ENCODE measurements at regions of chr3 and their contacts with region 1.

Region 1: GRCh38 chr3:142850386-142851023 is 38.4 kb downstream of the PCOLCE2 start:
- DNase-seq: peak; percentile 75
- H3K4me3 Mint-ChIP-seq: no peak overlapping the region
- H3K27ac Mint-ChIP-seq: no peak overlapping the region
- H3K4me1 Mint-ChIP-seq: peaks cover 18% of the 10 kb centered on the region
- H3K27me3 Mint-ChIP-seq: no peaks in the 10 kb centered on the region
- CTCF ChIP-seq: no peak

Region 2: GRCh38 chr3:142489557-142490323 is 360.8 kb before region 1 on chr3:
- CTCF ChIA-PET with region 1: no interaction called
- intact Hi-C with region 1: no loop called
- DNase-seq: no peak
- H3K4me3 Mint-ChIP-seq: no peak overlapping the region
- H3K27ac Mint-ChIP-seq: no peak overlapping the region
- H3K4me1 Mint-ChIP-seq: no peaks in the 10 kb centered on the region
- H3K27me3 Mint-ChIP-seq: no peaks in the 10 kb centered on the region
- CTCF ChIP-seq: no peak

Region 3: GRCh38 chr3:142796823-142797222 is 53.7 kb before region 1 on chr3:
- CTCF ChIA-PET with region 1: no interaction called
- intact Hi-C with region 1: no loop called
- DNase-seq: no peak
- H3K4me3 Mint-ChIP-seq: no peak overlapping the region
- H3K27ac Mint-ChIP-seq: no peak overlapping the region
- H3K4me1 Mint-ChIP-seq: no peaks in the 10 kb centered on the region
- H3K27me3 Mint-ChIP-seq: no peaks in the 10 kb centered on the region
- CTCF ChIP-seq: no peak

Region 4: GRCh38 chr3:142888481-142889211 is 38.1 kb after region 1 on chr3 and contains the start of gene PCOLCE2:
- CTCF ChIA-PET with region 1: interaction called, 4 read pairs
- intact Hi-C with region 1: loop called (anchors 1 kb)
- DNase-seq: peak; percentile 62
- H3K4me3 Mint-ChIP-seq: peak within 1 kb of the TSS; percentile 98
- H3K27ac Mint-ChIP-seq: peak within 1 kb of the TSS; percentile 67
- H3K4me1 Mint-ChIP-seq: peaks cover 15% of the 10 kb centered on the region
- H3K27me3 Mint-ChIP-seq: peaks cover 8% of the 10 kb centered on the region
- CTCF ChIP-seq: no peak
- total RNA-seq, gene PCOLCE2: 5.6 and 9.6 TPM in 2 replicates

Region 5: GRCh38 chr3:142904639-142905436 is 54.3 kb after region 1 on chr3:
- CTCF ChIA-PET with region 1: interaction called, 10 read pairs
- intact Hi-C with region 1: no loop called
- DNase-seq: peak; percentile 65
- H3K4me3 Mint-ChIP-seq: peak overlapping the region; percentile 25
- H3K27ac Mint-ChIP-seq: peak overlapping the region; percentile 0
- H3K4me1 Mint-ChIP-seq: peaks cover 17% of the 10 kb centered on the region
- H3K27me3 Mint-ChIP-seq: peaks cover 19% of the 10 kb centered on the region
- CTCF ChIP-seq: peak; percentile 63

Region 6: GRCh38 chr3:143001369-143002082 is 151.0 kb after region 1 on chr3 and contains the start of gene U2SURP:
- CTCF ChIA-PET with region 1: interaction called, 6 read pairs
- intact Hi-C with region 1: loop called (anchors 5 kb)
- DNase-seq: peak; percentile 99
- H3K4me3 Mint-ChIP-seq: peak within 1 kb of the TSS; percentile 94
- H3K27ac Mint-ChIP-seq: peak within 1 kb of the TSS; percentile 96
- H3K4me1 Mint-ChIP-seq: peaks cover 57% of the 10 kb centered on the region
- H3K27me3 Mint-ChIP-seq: no peaks in the 10 kb centered on the region
- CTCF ChIP-seq: no peak
- total RNA-seq, gene U2SURP: 275 TPM in 2 replicates